Lower leg skin (tissue), 4 donors: ENCODE measurements at regions of chrX and their contacts with region 1.

Region 1: DNA sequence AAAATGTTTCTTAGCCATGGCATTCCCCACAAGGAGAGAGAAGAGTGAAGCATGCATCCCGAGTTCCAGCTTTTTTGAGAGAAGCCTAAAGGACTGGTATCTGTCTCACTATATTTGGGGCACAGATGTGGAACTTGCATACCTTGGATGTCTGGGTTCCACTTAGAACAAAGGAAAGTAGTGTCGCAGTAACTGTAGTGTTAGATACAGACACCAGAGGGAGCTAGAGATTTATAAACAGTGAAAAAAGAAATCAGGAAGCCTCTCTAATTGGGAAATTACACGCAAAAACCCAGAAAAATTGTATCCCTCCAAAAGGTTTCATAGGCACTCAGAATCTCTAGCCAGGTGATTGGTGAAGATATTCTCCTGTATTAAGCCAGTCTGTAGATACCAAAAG is 34.4 kb downstream of the AGTR2 start:
- DNase-seq: no peak
- H3K4me3 ChIP-seq: no peak overlapping the region
- CTCF ChIP-seq: no peak
- POLR2A ChIP-seq: no peak

Region 2: DNA sequence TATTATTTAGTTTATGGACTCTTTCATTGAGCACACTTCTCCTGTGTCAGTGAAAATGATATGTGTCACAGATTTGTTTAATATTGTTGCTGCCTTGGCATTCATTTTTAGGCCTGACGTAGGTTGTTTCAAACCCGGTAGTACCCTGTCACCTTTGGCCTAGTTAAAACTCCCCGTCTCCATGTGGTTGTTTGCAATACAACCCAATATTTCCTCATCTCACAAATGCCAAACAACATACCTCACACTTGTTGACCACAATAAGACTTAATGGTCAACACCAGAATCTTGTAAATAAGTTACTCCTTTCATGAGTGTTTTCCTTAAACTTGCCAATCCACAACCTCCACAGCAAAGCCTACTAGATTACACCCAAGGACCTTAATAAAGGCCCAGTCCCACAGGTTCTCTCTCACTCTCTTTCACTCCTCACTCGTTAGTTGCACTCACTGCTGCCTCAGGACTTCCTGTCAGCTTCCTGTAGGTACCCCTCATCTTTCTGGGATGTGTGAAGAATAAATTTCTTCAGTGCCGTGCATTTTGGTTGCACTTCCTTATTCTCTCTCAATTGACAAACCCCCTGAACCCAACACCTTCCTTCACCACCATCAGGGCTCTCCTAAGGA is 1218.9 kb before region 1 on chrX:
- intact Hi-C with region 1: no loop called
- DNase-seq: no peak
- H3K4me3 ChIP-seq: no peak overlapping the region
- CTCF ChIP-seq: no peak
- POLR2A ChIP-seq: no peak

Region 3: DNA sequence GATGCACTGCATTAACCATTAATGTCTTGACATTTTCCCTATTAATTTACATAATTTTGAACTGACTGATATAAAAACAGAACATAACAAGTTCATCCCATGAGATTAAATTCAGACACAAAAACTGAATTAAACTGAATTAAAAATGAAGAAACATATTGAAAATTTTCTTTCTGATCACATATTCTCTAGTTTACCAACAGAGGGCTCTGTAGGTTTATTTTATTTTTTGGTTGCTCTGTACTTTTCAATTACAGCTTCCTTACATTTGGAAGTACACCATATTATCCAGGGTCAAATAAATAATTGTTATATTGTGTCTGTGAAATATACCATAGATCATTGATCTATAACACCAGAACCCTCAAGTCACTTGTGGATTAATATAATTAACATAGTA is 285.2 kb after region 1 on chrX:
- intact Hi-C with region 1: loop called (anchors 5 kb)
- DNase-seq: no peak
- H3K4me3 ChIP-seq: no peak overlapping the region
- CTCF ChIP-seq: no peak
- POLR2A ChIP-seq: no peak